ENCODE measurements at regions of chr6 and their contacts with region 1.

Region 1: GRCh38 chr6:29942275-29943052 is at the start of gene HLA-A:
- DNase-seq: peak; percentile 87 to 99 (median 91)
- ATAC-seq: peak; percentile 89
- H3K4me3 ChIP-seq: peak within 1 kb of the TSS; percentile 82
- H3K4me3 Mint-ChIP-seq: peak within 1 kb of the TSS; percentile 97
- H3K27ac ChIP-seq: peak within 1 kb of the TSS; percentile 96 to 99
- H3K27ac Mint-ChIP-seq: peak within 1 kb of the TSS; percentile 100
- H3K4me1 ChIP-seq: peaks cover 59% of the 10 kb centered on the region
- H3K4me1 Mint-ChIP-seq: peaks cover 60% of the 10 kb centered on the region
- H3K27me3 ChIP-seq: no peaks in the 10 kb centered on the region
- H3K27me3 Mint-ChIP-seq: peaks cover 4% of the 10 kb centered on the region
- CTCF ChIP-seq: no peak
- total RNA-seq, gene HLA-A: 1,767 to 1,801 TPM

Region 2: GRCh38 chr6:29791786-29792122 is 150.7 kb before region 1 on chr6:
- CTCF ChIA-PET with region 1: no interaction called
- POLR2A ChIA-PET with region 1: interaction called, 19 read pairs
- intact Hi-C with region 1: no loop called
- DNase-seq: peak in 1 of 14 experiments; percentile 16
- ATAC-seq: no peak
- H3K4me3 ChIP-seq: peak overlapping the region; percentile 80
- H3K4me3 Mint-ChIP-seq: peak overlapping the region; percentile 90
- H3K27ac ChIP-seq: no peak overlapping the region
- H3K27ac Mint-ChIP-seq: peak overlapping the region; percentile 24
- H3K4me1 ChIP-seq: peaks cover 22% of the 10 kb centered on the region
- H3K4me1 Mint-ChIP-seq: peaks cover 27% of the 10 kb centered on the region
- H3K27me3 ChIP-seq: peaks cover 7 to 15% of the 10 kb centered on the region in 2 experiments
- H3K27me3 Mint-ChIP-seq: peaks cover 58% of the 10 kb centered on the region
- CTCF ChIP-seq: no peak

Region 3: GRCh38 chr6:29887819-29888776 is 54.4 kb before region 1 on chr6:
- CTCF ChIA-PET with region 1: no interaction called
- POLR2A ChIA-PET with region 1: interaction called, 19 read pairs
- intact Hi-C with region 1: loop called (anchors 2 to 5 kb)
- DNase-seq: peak; percentile 66 to 95 (median 84)
- ATAC-seq: peak; percentile 80
- H3K4me3 ChIP-seq: peak overlapping the region; percentile 86
- H3K4me3 Mint-ChIP-seq: peak overlapping the region; percentile 93
- H3K27ac ChIP-seq: peak overlapping the region; percentile 73 to 89
- H3K27ac Mint-ChIP-seq: peak overlapping the region; percentile 97
- H3K4me1 ChIP-seq: peaks cover 22% of the 10 kb centered on the region
- H3K4me1 Mint-ChIP-seq: peaks cover 43% of the 10 kb centered on the region
- H3K27me3 ChIP-seq: no peaks in the 10 kb centered on the region
- H3K27me3 Mint-ChIP-seq: no peaks in the 10 kb centered on the region
- CTCF ChIP-seq: no peak

Region 4: GRCh38 chr6:29926413-29927274 is 15.8 kb before region 1 on chr6:
- CTCF ChIA-PET with region 1: interaction called, 3 read pairs
- POLR2A ChIA-PET with region 1: interaction called, 13 read pairs
- intact Hi-C with region 1: loop called (anchors 1 kb)
- DNase-seq: peak; percentile 59 to 96 (median 85)
- ATAC-seq: peak; percentile 93
- H3K4me3 ChIP-seq: peak overlapping the region; percentile 97
- H3K4me3 Mint-ChIP-seq: peak overlapping the region; percentile 98
- H3K27ac ChIP-seq: peak overlapping the region; percentile 93 to 99
- H3K27ac Mint-ChIP-seq: peak overlapping the region; percentile 92
- H3K4me1 ChIP-seq: peaks cover 24% of the 10 kb centered on the region
- H3K4me1 Mint-ChIP-seq: peaks cover 26% of the 10 kb centered on the region
- H3K27me3 ChIP-seq: no peaks in the 10 kb centered on the region
- H3K27me3 Mint-ChIP-seq: no peaks in the 10 kb centered on the region
- CTCF ChIP-seq: no peak

Region 5: GRCh38 chr6:30061092-30061857 is 118.8 kb after region 1 on chr6 and contains the start of gene POLR1H:
- CTCF ChIA-PET with region 1: no interaction called
- POLR2A ChIA-PET with region 1: interaction called, 4 read pairs
- intact Hi-C with region 1: loop called (anchors 5 to 10 kb)
- DNase-seq: peak; percentile 72 to 96 (median 84)
- ATAC-seq: peak; percentile 86
- H3K4me3 ChIP-seq: peak within 1 kb of the TSS; percentile 89
- H3K4me3 Mint-ChIP-seq: peak within 1 kb of the TSS; percentile 95
- H3K27ac ChIP-seq: peak within 1 kb of the TSS; percentile 89 to 94
- H3K27ac Mint-ChIP-seq: peak within 1 kb of the TSS; percentile 97
- H3K4me1 ChIP-seq: peaks cover 29% of the 10 kb centered on the region
- H3K4me1 Mint-ChIP-seq: peaks cover 46% of the 10 kb centered on the region
- H3K27me3 ChIP-seq: no peaks in the 10 kb centered on the region
- H3K27me3 Mint-ChIP-seq: no peaks in the 10 kb centered on the region
- CTCF ChIP-seq: no peak
- total RNA-seq, gene POLR1H: 36.5 to 39.4 TPM